Activated CD4-positive, alpha-beta T cell treated with anti-CD3 and anti-CD28 coated beads for 36 hours (primary cell): ENCODE measurements at regions of chr9 and their contacts with region 1.

Region 1: DNA sequence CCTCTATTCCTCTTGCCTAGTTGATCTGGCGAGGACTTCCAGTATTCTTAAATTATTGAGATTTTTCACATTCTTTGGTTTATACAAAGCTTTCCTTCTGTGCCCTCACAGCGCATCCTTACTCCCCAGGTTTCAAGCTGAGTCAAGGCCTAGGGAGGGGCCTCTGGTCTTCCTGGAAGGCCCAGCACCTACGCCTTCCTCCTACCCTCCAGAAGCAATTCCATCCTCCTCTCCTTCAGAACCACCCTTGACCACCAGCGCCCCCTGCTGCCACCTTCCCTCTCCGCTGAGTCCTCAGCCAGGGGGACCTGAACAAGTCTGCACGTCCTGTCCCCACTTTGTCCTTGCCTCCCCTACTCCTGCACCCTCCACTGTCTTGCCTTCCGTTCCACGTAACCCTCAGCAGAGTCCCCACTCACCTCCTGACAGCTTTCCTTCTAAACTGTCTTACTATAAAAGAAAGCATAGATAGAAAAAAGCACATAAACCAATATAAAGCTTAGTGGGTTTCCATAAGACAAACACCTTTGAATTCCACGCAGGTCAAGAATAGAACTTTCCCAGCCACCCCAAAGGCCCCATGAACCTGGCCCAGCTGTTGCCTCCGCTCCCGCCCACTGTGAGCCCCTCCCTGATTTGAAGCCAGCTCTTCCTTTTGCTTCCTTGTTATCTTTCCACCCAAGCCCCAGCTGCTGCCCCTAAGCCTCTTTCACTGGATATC is 63.0 kb upstream of the CTSL start:
- DNase-seq: peak; percentile 88
- ATAC-seq: no peak
- H3K4me3 Mint-ChIP-seq: no peak overlapping the region
- H3K27ac Mint-ChIP-seq: no peak overlapping the region
- H3K4me1 Mint-ChIP-seq: peaks cover 10% of the 10 kb centered on the region
- H3K27me3 Mint-ChIP-seq: peaks cover 2% of the 10 kb centered on the region

Region 2: GRCh38 chr9:86434039-86434726 is 1228.8 kb before region 1 on chr9:
- CTCF ChIA-PET with region 1: no interaction called
- POLR2A ChIA-PET with region 1: no interaction called
- intact Hi-C with region 1: loop called in 1 of 2 experiments (anchors 10 kb)
- DNase-seq: no peak
- ATAC-seq: no peak
- H3K4me3 Mint-ChIP-seq: no peak overlapping the region
- H3K27ac Mint-ChIP-seq: no peak overlapping the region
- H3K4me1 Mint-ChIP-seq: no peaks in the 10 kb centered on the region
- H3K27me3 Mint-ChIP-seq: peaks cover 13% of the 10 kb centered on the region

Region 3: DNA sequence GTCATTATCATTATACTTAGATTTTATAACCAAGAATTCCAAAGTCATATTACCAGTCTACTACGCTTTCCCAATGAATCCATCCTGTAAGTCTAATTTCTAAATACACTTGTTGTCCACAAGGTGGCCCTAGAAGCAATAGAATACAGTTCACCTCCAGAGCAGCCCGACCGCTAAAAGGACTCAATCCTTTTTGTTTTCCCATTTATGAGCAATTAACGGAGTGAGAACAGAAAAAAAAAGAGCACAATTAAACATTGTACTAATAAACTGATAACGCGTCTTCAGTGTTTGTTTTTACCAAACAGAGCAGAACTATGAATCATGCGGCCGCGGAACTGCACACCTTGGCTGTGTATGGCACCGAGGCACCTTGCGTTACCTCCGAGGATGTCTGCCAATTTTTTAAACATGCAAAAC is 326.0 kb before region 1 on chr9:
- CTCF ChIA-PET with region 1: interaction called, 19 read pairs
- POLR2A ChIA-PET with region 1: no interaction called
- intact Hi-C with region 1: loop called (anchors 1 kb)
- DNase-seq: peak; percentile 49
- ATAC-seq: peak; percentile 57
- H3K4me3 Mint-ChIP-seq: peak overlapping the region; percentile 41
- H3K27ac Mint-ChIP-seq: peak overlapping the region; percentile 38
- H3K4me1 Mint-ChIP-seq: peaks cover 13% of the 10 kb centered on the region
- H3K27me3 Mint-ChIP-seq: peaks cover 47% of the 10 kb centered on the region

Region 4: DNA sequence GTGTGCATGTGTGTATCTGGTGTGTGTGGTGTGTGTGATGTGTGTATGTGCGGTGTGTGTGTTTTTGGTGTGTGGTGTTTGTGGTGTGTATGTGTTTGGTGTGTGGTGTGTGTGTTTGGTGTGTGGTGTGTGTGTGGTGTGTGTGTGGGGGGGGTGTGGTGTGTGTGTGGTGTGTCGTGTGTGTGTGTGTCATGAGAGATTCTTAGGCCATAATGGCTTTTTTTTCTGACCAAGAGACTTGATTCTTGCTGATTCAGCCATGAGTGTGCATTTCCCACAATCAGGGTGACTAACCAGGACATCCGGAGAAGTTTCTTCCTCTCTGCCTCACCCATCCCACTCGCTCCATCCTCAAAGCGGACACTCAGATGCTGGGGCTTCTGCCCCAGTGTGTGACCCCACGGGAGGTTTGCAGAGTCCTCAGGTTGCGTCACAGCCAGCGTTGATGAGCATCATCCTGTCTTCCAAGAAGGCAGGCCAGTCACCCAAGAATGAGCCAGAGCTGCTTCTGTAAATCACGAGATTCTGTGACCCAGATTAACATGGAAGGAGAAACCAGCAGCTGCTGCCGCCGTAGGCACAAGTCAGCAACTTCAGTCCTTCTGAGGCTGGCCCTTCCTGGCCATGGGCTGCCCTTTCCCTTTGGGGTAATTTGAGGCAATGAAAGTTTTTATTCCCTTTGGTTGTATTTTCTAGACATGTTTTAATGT is 50.5 kb after region 1 on chr9:
- CTCF ChIA-PET with region 1: no interaction called
- POLR2A ChIA-PET with region 1: no interaction called
- intact Hi-C with region 1: no loop called
- DNase-seq: peak; percentile 75
- ATAC-seq: peak; percentile 64
- H3K4me3 Mint-ChIP-seq: no peak overlapping the region
- H3K27ac Mint-ChIP-seq: peak overlapping the region; percentile 5
- H3K4me1 Mint-ChIP-seq: peaks cover 46% of the 10 kb centered on the region
- H3K27me3 Mint-ChIP-seq: peaks cover 4% of the 10 kb centered on the region